ENCODE measurements at regions of chr4 and their contacts with region 1.

Region 1: DNA sequence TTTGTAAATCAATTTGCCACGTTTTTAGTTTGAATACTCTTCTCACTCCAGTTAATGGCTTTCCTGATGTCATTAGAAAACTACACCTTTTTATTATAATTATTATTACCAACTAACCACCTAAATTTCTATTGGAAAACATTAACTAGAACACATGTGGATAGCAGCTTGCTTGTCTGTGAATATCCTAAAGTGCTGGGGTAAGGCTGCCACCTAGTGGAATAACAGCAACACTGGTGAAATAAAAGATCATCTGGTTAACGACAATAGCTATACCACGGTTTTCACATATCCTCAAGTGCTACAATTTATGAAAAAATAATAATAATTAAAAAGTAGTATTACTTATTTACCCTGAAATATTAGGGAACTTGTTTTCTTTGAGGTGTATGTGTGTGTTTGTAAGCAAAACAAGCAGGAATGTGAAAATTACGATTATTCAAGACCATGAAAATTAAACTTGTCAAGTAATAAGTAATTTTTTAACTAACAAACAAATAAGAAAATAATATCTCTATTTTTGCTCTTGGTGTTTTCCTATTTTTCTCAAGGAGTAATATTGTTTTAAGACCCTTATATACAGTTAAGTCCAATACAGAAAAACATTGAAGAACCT is 130.1 kb upstream of the TECRL start:
- DNase-seq: peak; percentile 22
- ATAC-seq: no peak
- H3K4me3 ChIP-seq: no peak overlapping the region
- H3K27ac ChIP-seq: no peak overlapping the region
- H3K4me1 ChIP-seq: no peaks in the 10 kb centered on the region
- H3K27me3 ChIP-seq: no peaks in the 10 kb centered on the region
- CTCF ChIP-seq: peak; percentile 64; the same call in 1 of the 2 replicates

Region 2: GRCh38 chr4:63528256-63528991 is 1010.9 kb before region 1 on chr4:
- CTCF ChIA-PET with region 1: no interaction called
- POLR2A ChIA-PET with region 1: no interaction called
- in situ Hi-C with region 1: no loop called
- intact Hi-C with region 1: loop called (anchors 5 kb)
- DNase-seq: no peak
- ATAC-seq: no peak
- H3K4me3 ChIP-seq: no peak overlapping the region
- H3K27ac ChIP-seq: no peak overlapping the region
- H3K4me1 ChIP-seq: no peaks in the 10 kb centered on the region
- H3K27me3 ChIP-seq: no peaks in the 10 kb centered on the region
- CTCF ChIP-seq: peak; percentile 24; the same call in 1 of the 2 replicates

Region 3: DNA sequence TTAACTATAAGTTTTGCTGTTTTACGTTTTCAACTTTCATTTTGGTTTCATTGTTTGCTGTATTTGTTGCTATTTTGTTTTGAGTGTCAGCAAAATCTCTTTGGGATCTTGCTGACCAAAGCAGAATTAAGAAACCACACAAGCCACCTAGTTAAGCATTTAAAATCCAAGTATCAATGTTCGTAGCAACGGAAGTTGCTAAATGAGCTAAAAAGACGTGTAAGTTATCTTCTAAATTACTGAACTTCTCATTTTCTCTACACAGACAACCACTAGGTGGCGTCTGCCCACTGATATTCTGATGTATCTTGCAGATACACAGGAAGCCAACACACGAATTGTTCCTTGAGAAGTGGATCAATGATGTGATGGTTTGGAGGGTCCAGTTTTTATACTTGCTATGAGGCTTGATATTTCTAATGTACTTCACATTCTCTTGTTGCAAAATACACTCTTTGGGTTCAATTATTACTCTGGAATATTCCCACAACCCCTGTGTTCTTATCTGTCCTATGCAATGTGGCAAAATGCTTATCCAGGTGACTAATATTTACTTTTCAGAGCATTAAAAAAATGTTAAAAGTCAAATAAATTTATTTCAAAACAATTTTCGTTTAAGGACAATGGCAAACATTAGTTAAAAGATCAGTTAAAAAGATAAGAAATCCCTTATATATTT is 380.6 kb before region 1 on chr4:
- CTCF ChIA-PET with region 1: interaction called, 3 read pairs
- POLR2A ChIA-PET with region 1: no interaction called
- in situ Hi-C with region 1: no loop called
- intact Hi-C with region 1: loop called (anchors 1 kb)
- DNase-seq: peak; percentile 32
- ATAC-seq: no peak
- H3K4me3 ChIP-seq: peak overlapping the region in 1 of 2 experiments; percentile 19; a peak in 1 of 4 replicates
- H3K27ac ChIP-seq: no peak overlapping the region
- H3K4me1 ChIP-seq: no peaks in the 10 kb centered on the region
- H3K27me3 ChIP-seq: no peaks in the 10 kb centered on the region
- CTCF ChIP-seq: peak; percentile 59; the same call in 1 of the 2 replicates

Region 4: GRCh38 chr4:64305565-64306254 is 233.6 kb before region 1 on chr4:
- CTCF ChIA-PET with region 1: no interaction called
- POLR2A ChIA-PET with region 1: no interaction called
- in situ Hi-C with region 1: no loop called
- intact Hi-C with region 1: loop called (anchors 5 kb)
- DNase-seq: no peak
- ATAC-seq: no peak
- H3K4me3 ChIP-seq: no peak overlapping the region
- H3K27ac ChIP-seq: no peak overlapping the region
- H3K4me1 ChIP-seq: no peaks in the 10 kb centered on the region
- H3K27me3 ChIP-seq: no peaks in the 10 kb centered on the region
- CTCF ChIP-seq: no peak

Region 5: DNA sequence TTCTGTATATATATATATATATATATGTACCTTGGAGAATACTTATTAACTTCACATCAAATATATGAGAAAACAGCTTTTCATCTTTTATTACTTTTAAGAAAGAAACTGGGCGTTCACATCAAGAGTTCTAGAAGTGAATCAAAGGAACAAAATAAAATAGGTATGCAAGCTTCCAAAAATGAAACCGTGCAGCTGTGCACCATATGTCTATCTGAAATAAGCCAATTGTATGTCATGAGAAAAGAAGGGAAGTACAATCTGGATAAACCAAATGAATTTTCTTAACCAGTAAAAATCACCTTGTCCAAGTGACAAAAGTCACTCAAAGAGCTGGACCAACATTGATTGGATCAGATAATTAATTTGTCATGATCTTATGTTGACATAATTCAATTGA is 275.3 kb after region 1 on chr4:
- CTCF ChIA-PET with region 1: no interaction called
- POLR2A ChIA-PET with region 1: no interaction called
- in situ Hi-C with region 1: no loop called
- intact Hi-C with region 1: no loop called
- DNase-seq: no peak
- ATAC-seq: no peak
- H3K4me3 ChIP-seq: no peak overlapping the region
- H3K27ac ChIP-seq: no peak overlapping the region
- H3K4me1 ChIP-seq: no peaks in the 10 kb centered on the region
- H3K27me3 ChIP-seq: no peaks in the 10 kb centered on the region
- CTCF ChIP-seq: no peak

Measured in Panc1 (cell line).